Activated CD4-positive, alpha-beta memory T cell treated with anti-CD3 and anti-CD28 coated beads, Interleukin-2, amount 10 ng/mL, durations not matched to agents 7 days and 5 days (primary cell): ENCODE measurements at regions of chr9 and their contacts with region 1.

Region 1: GRCh38 chr9:5437254-5438216 is at the start of gene PLGRKT:
- DNase-seq: peak; percentile 93
- H3K4me3 Mint-ChIP-seq: peak within 1 kb of the TSS; percentile 86
- H3K27ac Mint-ChIP-seq: peak within 1 kb of the TSS; percentile 92
- H3K4me1 Mint-ChIP-seq: peaks cover 49% of the 10 kb centered on the region
- H3K27me3 Mint-ChIP-seq: no peaks in the 10 kb centered on the region
- total RNA-seq, gene PLGRKT: 32.0 TPM

Region 2: GRCh38 chr9:4762108-4762885 is 675.2 kb before region 1 on chr9:
- CTCF ChIA-PET with region 1: interaction called, 12 read pairs
- POLR2A ChIA-PET with region 1: interaction called, 6 read pairs
- DNase-seq: peak; percentile 87
- H3K4me3 Mint-ChIP-seq: peak overlapping the region; percentile 18
- H3K27ac Mint-ChIP-seq: peak overlapping the region; percentile 10
- H3K4me1 Mint-ChIP-seq: peaks cover 16% of the 10 kb centered on the region
- H3K27me3 Mint-ChIP-seq: peaks cover 8% of the 10 kb centered on the region

Region 3: DNA sequence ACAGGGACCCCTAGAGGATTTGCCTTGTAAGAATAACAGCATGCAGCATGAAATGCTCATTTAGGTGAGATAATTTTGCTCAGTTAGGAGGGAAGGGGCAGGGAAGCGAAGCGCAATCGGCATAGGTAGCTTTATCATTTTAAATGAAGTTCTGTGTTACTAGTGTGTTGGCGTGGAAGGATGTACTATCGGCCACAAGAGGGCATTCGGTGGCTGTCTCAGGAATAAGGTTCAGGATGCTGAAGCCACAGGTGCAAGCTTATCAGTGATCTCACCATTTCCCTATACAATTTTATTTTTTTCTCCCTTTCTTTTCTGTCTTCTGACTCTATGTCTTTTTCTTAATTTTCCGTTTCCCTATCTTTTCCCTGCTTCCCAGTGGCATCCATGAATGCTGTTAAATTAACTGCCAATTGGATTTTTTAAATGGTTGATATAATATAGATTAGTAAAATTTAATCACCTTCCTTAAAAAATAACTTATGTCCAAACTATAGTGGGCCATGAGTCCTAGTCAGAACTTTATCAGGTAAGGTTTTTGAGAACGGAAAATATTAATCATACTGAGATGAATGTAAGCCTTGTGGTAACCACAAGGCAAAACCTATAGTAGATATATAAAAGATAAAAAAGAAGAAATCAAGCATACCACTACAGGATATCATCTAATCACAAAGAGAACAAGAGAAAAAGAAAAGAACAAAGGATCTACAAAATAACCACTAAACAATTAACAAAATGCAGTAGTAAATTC is 250.9 kb before region 1 on chr9:
- CTCF ChIA-PET with region 1: interaction called, 58 read pairs
- POLR2A ChIA-PET with region 1: interaction called, 5 read pairs
- DNase-seq: peak; percentile 70
- H3K4me3 Mint-ChIP-seq: no peak overlapping the region
- H3K27ac Mint-ChIP-seq: no peak overlapping the region
- H3K4me1 Mint-ChIP-seq: peaks cover 19% of the 10 kb centered on the region
- H3K27me3 Mint-ChIP-seq: no peaks in the 10 kb centered on the region

Region 4: DNA sequence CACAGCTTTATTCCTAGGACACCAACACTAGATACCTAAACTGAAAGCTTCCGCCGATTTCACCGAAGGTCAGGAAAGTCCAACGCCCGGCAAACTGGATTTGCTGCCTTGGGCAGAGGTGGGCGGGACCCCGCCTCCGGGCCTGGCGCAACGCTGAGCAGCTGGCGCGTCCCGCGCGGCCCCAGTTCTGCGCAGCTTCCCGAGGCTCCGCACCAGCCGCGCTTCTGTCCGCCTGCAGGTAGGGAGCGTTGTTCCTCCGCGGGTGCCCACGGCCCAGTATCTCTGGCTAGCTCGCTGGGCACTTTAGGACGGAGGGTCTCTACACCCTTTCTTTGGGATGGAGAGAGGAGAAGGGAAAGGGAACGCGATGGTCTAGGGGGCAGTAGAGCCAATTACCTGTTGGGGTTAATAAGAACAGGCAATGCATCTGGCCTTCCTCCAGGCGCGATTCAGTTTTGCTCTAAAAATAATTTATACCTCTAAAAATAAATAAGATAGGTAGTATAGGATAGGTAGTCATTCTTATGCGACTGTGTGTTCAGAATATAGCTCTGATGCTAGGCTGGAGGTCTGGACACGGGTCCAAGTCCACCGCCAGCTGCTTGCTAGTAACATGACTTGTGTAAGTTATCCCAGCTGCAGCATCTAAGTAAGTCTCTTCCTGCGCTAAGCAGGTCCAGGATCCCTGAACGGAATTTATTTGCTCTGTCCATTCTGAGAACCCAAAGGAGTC is 13.0 kb after region 1 on chr9 and contains the start of gene CD274:
- CTCF ChIA-PET with region 1: interaction called, 45 read pairs
- POLR2A ChIA-PET with region 1: interaction called, 106 read pairs
- DNase-seq: peak; percentile 86
- H3K4me3 Mint-ChIP-seq: peak within 1 kb of the TSS; percentile 95
- H3K27ac Mint-ChIP-seq: peak within 1 kb of the TSS; percentile 84
- H3K4me1 Mint-ChIP-seq: peaks cover 75% of the 10 kb centered on the region
- H3K27me3 Mint-ChIP-seq: no peaks in the 10 kb centered on the region
- total RNA-seq, gene CD274: 12.4 to 12.6 TPM

Region 5: DNA sequence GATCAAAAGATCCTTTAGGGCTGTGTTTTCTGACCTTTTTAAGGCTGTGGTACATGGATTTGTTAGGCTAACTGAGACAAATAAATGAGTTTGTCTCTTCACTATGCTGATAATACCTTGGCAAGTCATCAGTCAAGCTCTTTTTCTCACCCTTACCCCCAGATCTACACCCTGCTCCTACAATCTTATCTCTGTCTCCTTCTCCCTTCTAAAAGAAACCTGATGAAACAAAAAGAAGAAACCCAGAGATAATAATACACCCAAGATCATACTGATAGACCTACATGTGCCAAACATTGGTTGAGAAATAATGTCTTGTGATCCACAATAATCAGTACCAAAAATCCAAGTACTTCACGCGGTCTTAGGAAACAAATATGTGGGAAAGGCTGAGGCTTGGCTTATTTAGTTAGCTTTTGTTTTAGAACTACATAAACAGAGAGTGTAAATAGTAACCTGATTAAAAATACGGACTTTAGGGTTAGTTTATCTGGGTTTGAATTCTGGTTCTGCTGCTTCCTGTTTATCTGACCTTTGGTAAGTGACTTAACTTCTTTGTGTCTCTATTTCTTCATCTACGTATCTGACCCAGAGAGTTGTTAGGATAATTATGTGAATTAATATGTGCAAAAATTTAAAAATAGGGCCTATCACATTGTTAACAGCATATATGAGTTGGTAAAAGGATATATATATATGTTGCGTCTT is 48.0 kb after region 1 on chr9:
- CTCF ChIA-PET with region 1: no interaction called
- POLR2A ChIA-PET with region 1: no interaction called
- DNase-seq: no peak
- H3K4me3 Mint-ChIP-seq: no peak overlapping the region
- H3K27ac Mint-ChIP-seq: no peak overlapping the region
- H3K4me1 Mint-ChIP-seq: peaks cover under 1% of the 10 kb centered on the region
- H3K27me3 Mint-ChIP-seq: no peaks in the 10 kb centered on the region

Region 6: GRCh38 chr9:5510360-5510931 is 72.9 kb after region 1 on chr9 and contains the start of gene PDCD1LG2:
- CTCF ChIA-PET with region 1: interaction called, 4 read pairs
- POLR2A ChIA-PET with region 1: interaction called, 20 read pairs
- DNase-seq: peak; percentile 59
- H3K4me3 Mint-ChIP-seq: peak within 1 kb of the TSS; percentile 80
- H3K27ac Mint-ChIP-seq: peak within 1 kb of the TSS; percentile 95
- H3K4me1 Mint-ChIP-seq: peaks cover 60% of the 10 kb centered on the region
- H3K27me3 Mint-ChIP-seq: no peaks in the 10 kb centered on the region
- total RNA-seq, gene PDCD1LG2: 4.1 to 4.8 TPM

Region 7: DNA sequence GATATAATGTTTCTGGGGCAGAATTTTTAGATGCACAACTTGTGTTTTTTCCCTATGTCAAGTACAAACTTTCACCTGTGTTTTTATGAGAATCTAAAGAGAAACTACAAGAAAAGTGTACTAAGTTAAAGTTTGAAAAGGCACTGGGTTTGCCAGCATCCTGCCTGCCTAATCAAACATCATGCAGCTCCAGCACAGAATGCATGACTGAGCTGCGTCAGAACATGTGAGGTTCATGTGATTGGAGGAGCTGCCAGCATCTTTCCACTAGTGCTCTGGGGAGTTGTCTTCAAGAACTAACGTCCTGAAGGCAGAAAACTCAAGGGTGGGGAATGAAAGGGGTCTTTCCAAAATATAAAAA is 145.3 kb after region 1 on chr9:
- CTCF ChIA-PET with region 1: interaction called, 40 read pairs
- POLR2A ChIA-PET with region 1: interaction called, 32 read pairs
- DNase-seq: peak; percentile 53
- H3K4me3 Mint-ChIP-seq: no peak overlapping the region
- H3K27ac Mint-ChIP-seq: no peak overlapping the region
- H3K4me1 Mint-ChIP-seq: peaks cover 65% of the 10 kb centered on the region
- H3K27me3 Mint-ChIP-seq: no peaks in the 10 kb centered on the region

Region 8: DNA sequence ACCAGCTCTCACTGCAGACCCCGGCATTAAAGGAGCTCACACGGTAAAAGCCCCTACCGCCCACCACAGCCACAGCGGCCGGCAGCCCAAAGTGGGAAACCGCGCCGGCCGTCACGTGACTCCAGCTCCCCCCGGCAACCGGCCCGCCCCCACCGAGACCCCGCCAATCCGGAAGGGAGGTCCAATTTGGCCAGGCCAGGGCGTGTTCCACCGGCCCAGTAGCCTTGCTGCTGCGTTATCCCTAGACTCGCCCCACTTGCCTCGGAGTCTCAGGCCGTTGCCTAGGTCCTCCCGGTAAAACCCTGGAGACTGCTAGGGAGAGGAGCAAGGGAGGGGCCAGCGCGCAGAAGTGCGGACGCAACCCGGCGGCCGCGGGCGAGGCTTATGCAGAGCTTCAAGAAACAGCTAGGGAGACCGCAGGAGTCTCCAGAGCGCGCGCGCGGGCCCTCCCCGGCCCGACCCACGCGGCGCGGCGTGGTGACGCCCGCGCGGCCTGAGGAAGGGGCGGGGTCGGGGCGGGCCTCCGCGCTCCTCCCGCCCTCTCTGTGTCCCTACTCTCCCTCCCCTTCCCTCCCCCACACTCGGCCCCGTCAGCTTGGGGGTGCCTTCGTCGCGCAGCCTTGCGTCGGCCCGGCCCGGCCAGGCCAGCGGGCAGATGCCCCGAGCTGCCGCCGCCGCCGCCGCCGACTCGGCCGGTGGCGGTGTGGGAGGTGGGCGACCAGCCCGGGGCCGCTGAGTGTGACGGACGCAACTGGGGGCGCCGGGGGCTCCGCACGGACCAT is 191.2 kb after region 1 on chr9 and contains the start of gene RIC1:
- CTCF ChIA-PET with region 1: interaction called, 4 read pairs
- POLR2A ChIA-PET with region 1: interaction called, 39 read pairs
- DNase-seq: peak; percentile 93
- H3K4me3 Mint-ChIP-seq: peak within 1 kb of the TSS; percentile 99
- H3K27ac Mint-ChIP-seq: peak within 1 kb of the TSS; percentile 100
- H3K4me1 Mint-ChIP-seq: peaks cover 57% of the 10 kb centered on the region
- H3K27me3 Mint-ChIP-seq: no peaks in the 10 kb centered on the region
- total RNA-seq, gene RIC1: 20.7 to 21.5 TPM

Region 9: DNA sequence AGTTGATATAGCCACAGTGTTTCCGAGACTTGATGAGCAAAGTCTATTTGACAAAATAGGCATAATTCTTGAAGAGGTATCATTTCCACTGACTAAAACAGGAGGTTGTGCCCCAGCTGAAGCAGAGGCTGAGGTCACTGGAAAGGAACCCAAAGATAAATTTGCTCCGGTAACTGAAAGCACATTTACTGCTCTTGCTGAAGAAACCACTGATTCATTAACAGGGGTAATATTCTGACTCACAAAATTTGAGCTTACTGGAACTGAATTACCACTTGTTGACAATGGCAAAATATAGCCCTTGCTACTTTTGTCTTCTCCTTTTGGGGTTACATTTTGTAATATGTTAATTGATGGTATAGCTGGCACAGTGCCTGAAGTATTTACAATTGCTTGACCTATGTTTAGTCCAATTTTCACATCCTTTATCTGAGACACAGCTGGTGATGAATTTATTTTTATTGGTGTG is 483.4 kb after region 1 on chr9:
- CTCF ChIA-PET with region 1: no interaction called
- POLR2A ChIA-PET with region 1: no interaction called
- DNase-seq: no peak
- H3K4me3 Mint-ChIP-seq: no peak overlapping the region
- H3K27ac Mint-ChIP-seq: peak overlapping the region; percentile 33
- H3K4me1 Mint-ChIP-seq: peaks cover 27% of the 10 kb centered on the region
- H3K27me3 Mint-ChIP-seq: no peaks in the 10 kb centered on the region